A549 (cell line): ENCODE measurements at regions of chr14 and their contacts with region 1.

Region 1: DNA sequence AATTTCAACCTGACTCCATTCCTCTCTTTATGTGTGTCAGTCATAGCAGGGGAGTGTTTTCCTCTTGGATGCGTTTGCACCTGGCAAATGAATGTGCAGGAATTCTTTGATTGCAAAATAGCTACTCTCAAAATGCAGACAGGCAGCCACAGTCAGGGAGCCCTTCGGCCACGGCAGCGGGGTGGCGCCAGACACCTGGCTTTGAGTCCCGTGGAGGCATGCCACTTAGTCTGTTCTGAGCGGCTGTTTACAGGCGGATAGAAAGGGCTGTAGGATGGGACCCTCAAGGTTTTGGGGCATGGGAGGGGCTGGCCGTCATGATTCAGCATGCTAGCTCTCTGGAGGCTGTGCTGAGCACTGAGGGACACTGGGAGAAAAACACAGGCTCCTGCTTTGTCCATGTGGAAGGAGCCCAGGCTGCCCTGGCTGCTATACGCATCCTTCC is 117.1 kb downstream of the SLC25A47 start:
- DNase-seq: peak; percentile 81 to 89
- ATAC-seq: peak; percentile 83 to 93
- H3K4me3 ChIP-seq: no peak overlapping the region
- H3K27ac ChIP-seq: peak overlapping the region; percentile 70 to 83
- H3K4me1 ChIP-seq: peaks cover 61% of the 10 kb centered on the region
- CTCF ChIP-seq: peak; percentile 90
- EP300 ChIP-seq: no peak
- POLR2A ChIP-seq: no peak
- RAD21 ChIP-seq: peak; percentile 97 to 98

Region 2: DNA sequence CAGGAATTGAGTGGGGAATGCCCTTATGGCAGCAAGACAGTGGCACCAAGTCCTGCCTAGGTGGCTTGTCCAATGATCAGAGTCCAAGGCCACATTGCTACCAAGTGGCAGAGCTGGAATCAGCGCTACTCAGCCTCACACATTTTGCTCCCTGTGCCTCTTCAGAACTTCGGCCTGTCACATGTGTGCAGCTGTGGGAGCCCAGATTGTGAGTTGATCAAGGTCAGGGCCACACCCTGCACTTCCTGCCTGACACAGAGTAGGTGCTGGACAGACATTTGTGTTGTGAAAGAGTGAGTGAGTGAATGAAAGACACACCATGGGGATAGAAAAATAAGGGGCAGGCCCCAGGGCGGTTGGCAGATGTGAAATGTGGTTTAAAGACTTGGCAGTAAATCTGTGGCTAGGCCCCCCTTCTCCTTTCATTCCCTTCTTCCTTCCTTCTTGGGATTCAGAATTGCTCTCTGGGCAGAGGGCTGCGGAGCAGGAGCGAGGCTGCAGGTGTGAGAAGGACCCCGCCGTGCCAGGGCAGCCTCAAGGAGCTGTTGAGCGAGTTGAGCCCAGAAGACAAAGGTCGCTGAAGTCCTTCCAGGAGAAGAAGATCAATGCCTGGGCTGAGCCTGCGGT is 33.6 kb before region 1 on chr14:
- CTCF ChIA-PET with region 1: interaction called, 16 read pairs
- POLR2A ChIA-PET with region 1: no interaction called
- DNase-seq: peak in 1 of 2 experiments; percentile 66
- ATAC-seq: peak in 1 of 2 experiments; percentile 28; a peak in 2 of 6 replicates
- H3K4me3 ChIP-seq: no peak overlapping the region
- H3K27ac ChIP-seq: peak overlapping the region; percentile 82 to 88
- H3K4me1 ChIP-seq: peaks cover 55% of the 10 kb centered on the region
- CTCF ChIP-seq: no peak
- EP300 ChIP-seq: 0 out of 5 replicates have a peak, but pooled peaks of 1 of the 2 experiments have one; percentile 22
- POLR2A ChIP-seq: no peak
- RAD21 ChIP-seq: no peak

Region 3: GRCh38 chr14:100428727-100429126 is 11.5 kb before region 1 on chr14:
- CTCF ChIA-PET with region 1: interaction called, 61 read pairs
- POLR2A ChIA-PET with region 1: no interaction called
- DNase-seq: no peak
- ATAC-seq: no peak
- H3K4me3 ChIP-seq: no peak overlapping the region
- H3K27ac ChIP-seq: no peak overlapping the region
- H3K4me1 ChIP-seq: peaks cover 14% of the 10 kb centered on the region
- CTCF ChIP-seq: no peak
- EP300 ChIP-seq: no peak
- POLR2A ChIP-seq: no peak
- RAD21 ChIP-seq: no peak

Region 4: DNA sequence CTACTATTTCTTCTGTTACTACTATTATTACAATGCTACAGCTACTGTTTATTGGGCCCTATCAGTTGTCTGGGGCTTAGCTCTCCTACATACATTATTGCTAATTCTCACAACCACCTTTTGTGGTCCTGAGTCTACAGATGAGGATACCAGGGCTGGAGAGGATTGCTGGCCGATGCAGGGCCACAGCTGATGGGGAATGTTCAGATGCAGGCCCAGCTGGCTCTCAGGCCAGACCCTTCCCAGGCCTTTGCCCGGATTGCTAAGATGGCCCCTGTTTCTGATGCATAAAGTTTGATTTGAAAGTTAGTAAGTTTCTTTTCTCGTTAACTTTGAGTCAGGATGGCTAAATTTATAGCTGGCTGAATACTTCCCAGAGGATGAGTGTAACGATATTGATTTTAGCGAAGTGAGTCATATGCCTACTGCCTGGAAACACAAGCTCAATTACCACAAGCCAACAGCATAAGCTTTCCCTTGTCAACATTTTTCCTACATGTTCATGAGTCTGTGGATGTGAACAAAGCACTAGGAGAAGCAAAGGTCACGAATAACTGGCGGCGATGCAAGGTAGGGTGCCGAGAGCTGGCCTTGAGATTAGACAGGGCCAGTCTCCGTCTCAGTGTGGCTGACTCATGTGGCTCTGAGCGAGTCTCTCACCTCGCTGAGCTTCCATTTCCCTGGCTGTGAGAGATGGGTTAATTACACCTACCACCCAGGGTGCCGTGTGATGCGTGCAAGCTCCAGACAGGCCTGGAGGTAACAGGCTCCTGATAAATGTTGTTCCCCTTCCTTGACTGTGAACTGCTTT is 36.0 kb after region 1 on chr14:
- CTCF ChIA-PET with region 1: interaction called, 41 read pairs
- POLR2A ChIA-PET with region 1: interaction called, 10 read pairs
- DNase-seq: peak; percentile 78 to 91
- ATAC-seq: peak; percentile 95 to 96
- H3K4me3 ChIP-seq: 0 out of 3 replicates have a peak overlapping the region, but pooled peaks have one; percentile 9
- H3K27ac ChIP-seq: peak overlapping the region; percentile 81 to 92
- H3K4me1 ChIP-seq: peaks cover 34% of the 10 kb centered on the region
- CTCF ChIP-seq: no peak
- EP300 ChIP-seq: peak; percentile 41 to 78; a peak in 3 of 5 replicates
- POLR2A ChIP-seq: no peak
- RAD21 ChIP-seq: no peak

Region 5: GRCh38 chr14:100654814-100655740 is 214.9 kb after region 1 on chr14:
- CTCF ChIA-PET with region 1: interaction called, 110 read pairs
- POLR2A ChIA-PET with region 1: no interaction called
- DNase-seq: peak; percentile 30 to 90
- ATAC-seq: peak; percentile 86 to 94
- H3K4me3 ChIP-seq: peak overlapping the region; percentile 41
- H3K27ac ChIP-seq: peak overlapping the region; percentile 67 to 86
- H3K4me1 ChIP-seq: peaks cover 3% of the 10 kb centered on the region; the same call in 1 of the 3 replicates
- CTCF ChIP-seq: peak; percentile 89
- EP300 ChIP-seq: no peak
- POLR2A ChIP-seq: no peak
- RAD21 ChIP-seq: peak; percentile 65 to 89